Activated CD4-positive, alpha-beta T cell treated with anti-CD3 and anti-CD28 coated beads, Interleukin-2, amount 10 ng/mL, durations not matched to agents 24 days and 14 days (primary cell): ENCODE measurements at regions of chr11 and their contacts with region 1.

Region 1: DNA sequence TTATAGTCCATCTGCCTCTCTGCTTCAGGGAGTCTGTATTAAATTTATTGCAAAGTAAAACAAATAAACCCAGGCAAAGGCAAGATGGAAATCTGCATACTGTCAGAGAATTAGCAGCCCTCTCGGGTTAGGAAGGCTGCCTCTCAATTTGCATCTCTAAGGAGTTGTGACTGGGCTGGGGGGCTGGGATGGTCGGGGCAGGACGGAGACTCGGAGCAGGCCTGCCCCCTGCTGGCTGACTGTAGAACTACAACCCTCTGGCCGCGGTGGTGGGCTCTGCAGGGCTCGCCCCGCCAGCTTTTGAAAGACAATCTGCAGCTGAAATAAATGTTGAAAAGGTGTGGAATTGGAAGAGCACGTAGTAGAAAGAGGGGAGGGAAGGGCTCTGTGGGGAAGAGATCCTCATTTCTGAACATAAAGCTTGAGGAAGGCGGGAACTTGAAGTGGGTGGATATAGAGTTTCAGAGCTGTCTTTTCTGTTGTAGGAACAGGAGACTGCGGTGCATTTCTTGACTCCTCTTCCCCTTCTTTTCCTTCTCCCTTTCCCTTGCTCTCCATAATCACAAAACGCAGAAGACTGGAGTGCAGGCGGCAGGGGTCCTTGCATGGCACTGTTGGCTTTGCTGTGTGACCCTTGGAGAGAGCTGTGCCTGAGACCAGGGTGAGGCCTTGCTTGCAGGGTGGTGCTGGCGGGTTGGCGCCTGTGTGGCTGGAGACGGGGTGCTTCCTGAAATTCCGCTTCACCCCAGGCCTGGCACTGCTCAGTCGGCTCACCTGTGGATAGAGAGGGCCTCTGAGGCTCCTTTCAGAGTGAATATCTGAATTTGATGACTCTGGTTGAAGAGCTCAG is 22.6 kb upstream of the PKNOX2 start:
- DNase-seq: peak; percentile 87
- H3K4me3 Mint-ChIP-seq: no peak overlapping the region
- H3K27ac Mint-ChIP-seq: no peak overlapping the region
- H3K4me1 Mint-ChIP-seq: peaks cover 3% of the 10 kb centered on the region
- H3K27me3 Mint-ChIP-seq: peaks cover 38% of the 10 kb centered on the region

Region 2: DNA sequence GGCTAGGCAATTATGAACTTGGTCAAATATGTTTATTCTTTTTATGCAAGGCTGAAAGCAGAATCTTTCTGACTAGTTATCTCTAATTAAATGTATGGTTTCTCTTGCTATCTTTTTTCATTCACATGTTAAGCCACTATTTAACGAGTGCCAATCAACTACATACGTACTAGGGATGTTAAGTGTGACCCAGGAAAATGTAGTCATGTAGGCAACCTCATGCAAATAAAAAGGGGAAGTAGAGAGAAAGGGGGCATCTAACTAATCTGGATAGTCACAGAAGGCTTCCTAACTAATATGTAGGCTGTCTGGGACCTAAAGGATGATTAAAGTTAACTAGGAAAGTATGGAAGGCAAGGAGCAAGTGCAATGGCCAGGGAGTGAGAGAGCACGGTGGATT is 495.8 kb before region 1 on chr11:
- intact Hi-C with region 1: no loop called
- DNase-seq: no peak
- H3K4me3 Mint-ChIP-seq: no peak overlapping the region
- H3K27ac Mint-ChIP-seq: no peak overlapping the region
- H3K4me1 Mint-ChIP-seq: no peaks in the 10 kb centered on the region
- H3K27me3 Mint-ChIP-seq: no peaks in the 10 kb centered on the region

Region 3: DNA sequence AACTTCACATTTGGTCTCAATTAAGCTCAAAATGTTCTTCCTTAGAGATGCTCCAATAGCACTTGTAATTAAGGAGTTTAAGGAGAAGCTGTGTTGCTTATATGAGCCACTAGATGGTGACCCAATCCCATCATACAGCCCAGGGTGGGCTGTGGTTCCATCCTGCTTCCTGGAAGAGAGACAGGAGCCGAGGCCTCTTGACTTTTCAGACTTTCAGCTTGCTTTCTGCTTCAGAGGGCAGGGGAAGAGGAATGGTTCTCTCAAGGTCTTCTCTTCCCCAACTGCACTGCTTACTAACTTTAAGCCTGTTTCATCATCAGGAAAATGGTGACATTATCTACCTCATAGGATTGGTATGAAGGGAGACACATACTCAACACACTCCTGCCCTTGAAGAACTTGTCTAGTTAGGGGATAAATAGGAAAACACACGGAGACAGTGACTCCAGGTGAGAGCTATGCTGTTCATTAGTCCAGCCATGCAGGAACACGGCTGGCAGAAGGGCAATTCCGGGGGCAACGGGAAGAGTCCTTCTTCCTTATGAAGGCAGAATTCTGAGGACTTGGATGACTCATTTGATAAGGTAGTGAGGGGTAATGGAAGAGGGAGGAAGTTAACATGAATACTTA is 50.5 kb before region 1 on chr11:
- intact Hi-C with region 1: loop called (anchors 5 kb)
- DNase-seq: no peak
- H3K4me3 Mint-ChIP-seq: no peak overlapping the region
- H3K27ac Mint-ChIP-seq: no peak overlapping the region
- H3K4me1 Mint-ChIP-seq: peaks cover 3% of the 10 kb centered on the region
- H3K27me3 Mint-ChIP-seq: no peaks in the 10 kb centered on the region